Heart left ventricle (tissue), 16 donors: ENCODE measurements at regions of chr14 and their contacts with region 1.

Region 1: DNA sequence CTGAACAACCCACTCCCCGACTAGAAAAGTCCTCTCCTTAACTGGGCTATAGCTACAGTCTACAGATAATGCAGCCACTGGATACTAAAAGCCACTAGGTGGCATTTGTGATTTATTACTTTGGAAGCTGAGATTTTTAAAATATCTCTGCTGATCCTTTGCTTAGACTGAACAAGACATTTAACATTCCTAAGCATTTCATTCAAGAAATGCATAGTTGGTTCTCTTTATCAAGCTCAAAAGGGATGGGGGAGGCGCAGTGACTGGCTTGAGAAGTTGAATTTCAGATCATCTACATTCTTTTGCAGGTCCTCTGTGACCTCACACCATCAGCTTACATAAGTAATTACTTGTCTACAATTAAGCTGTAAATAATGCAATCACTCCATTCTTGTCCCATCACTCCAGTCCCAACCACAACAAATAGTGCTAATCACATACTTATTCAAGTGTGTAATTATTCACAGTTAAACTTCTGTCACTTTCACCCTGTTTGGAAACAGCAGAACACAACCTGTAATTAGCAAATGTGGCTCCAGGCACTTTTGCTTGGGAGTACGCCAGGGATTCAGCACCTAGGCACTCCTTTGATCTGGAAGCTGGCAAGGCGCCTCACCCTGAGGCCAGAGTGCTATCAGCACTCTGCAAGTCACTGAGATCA is 203.6 kb downstream of the NOVA1 start:
- DNase-seq: no peak
- ATAC-seq: no peak
- H3K4me3 ChIP-seq: no peak overlapping the region
- H3K27ac ChIP-seq: no peak overlapping the region
- H3K4me1 ChIP-seq: no peaks in the 10 kb centered on the region
- H3K27me3 ChIP-seq: no peaks in the 10 kb centered on the region
- CTCF ChIP-seq: peak in 9 of 12 donors; percentile 10 to 55 (median 30)
- POLR2A ChIP-seq: no peak

Region 2: GRCh38 chr14:26925876-26926584 is 531.8 kb after region 1 on chr14:
- intact Hi-C with region 1: loop called in 1 of 10 experiments (anchors 10 kb)
- DNase-seq: no peak
- ATAC-seq: no peak
- H3K4me3 ChIP-seq: no peak overlapping the region
- H3K27ac ChIP-seq: no peak overlapping the region
- H3K4me1 ChIP-seq: no peaks in the 10 kb centered on the region
- H3K27me3 ChIP-seq: no peaks in the 10 kb centered on the region
- CTCF ChIP-seq: no peak
- POLR2A ChIP-seq: no peak

Region 3: GRCh38 chr14:26984311-26985177 is 590.3 kb after region 1 on chr14:
- intact Hi-C with region 1: loop called in 5 of 10 experiments (anchors 5 to 10 kb)
- DNase-seq: peak in 4 of 5 donors; percentile 18 to 52 (median 32)
- ATAC-seq: peak in 1 of 4 donors; percentile 59
- H3K4me3 ChIP-seq: no peak overlapping the region
- H3K27ac ChIP-seq: no peak overlapping the region
- H3K4me1 ChIP-seq: no peaks in the 10 kb centered on the region
- H3K27me3 ChIP-seq: no peaks in the 10 kb centered on the region
- CTCF ChIP-seq: peak; percentile 44 to 75 (median 60)
- POLR2A ChIP-seq: no peak